Esophagus squamous epithelium (tissue), 5 donors: ENCODE measurements at regions of chr4 and their contacts with region 1.

Region 1: GRCh38 chr4:185395956-185396723 is 416 bp upstream of the LRP2BP start:
- DNase-seq: peak; percentile 76
- H3K4me3 ChIP-seq: peak overlapping the region; percentile 54 to 85 (median 76)
- H3K27ac ChIP-seq: peak overlapping the region; percentile 95 to 100 (median 98)
- H3K4me1 ChIP-seq: peaks cover 7 to 56% (median 19%) of the 10 kb centered on the region in 3 donors
- H3K27me3 ChIP-seq: no peaks in the 10 kb centered on the region
- CTCF ChIP-seq: no peak
- POLR2A ChIP-seq: peak in 3 of 4 donors; percentile 73 to 84 (median 83)

Region 2: GRCh38 chr4:185203486-185204237 is 192.5 kb before region 1 on chr4 and contains the start of gene CFAP97:
- intact Hi-C with region 1: loop called (anchors 10 kb)
- DNase-seq: peak; percentile 41
- H3K4me3 ChIP-seq: peak within 1 kb of the TSS; percentile 62 to 96 (median 82)
- H3K27ac ChIP-seq: peak within 1 kb of the TSS; percentile 92 to 98 (median 96)
- H3K4me1 ChIP-seq: peaks cover 19 to 40% (median 20%) of the 10 kb centered on the region in 3 donors
- H3K27me3 ChIP-seq: no peaks in the 10 kb centered on the region
- CTCF ChIP-seq: peak in 2 of 6 experiments; percentile 5 to 32
- POLR2A ChIP-seq: peak in 2 of 4 donors; percentile 78 to 82
- total RNA-seq, gene CFAP97: 14.6 to 34.0 (median 20.0) TPM

Region 3: DNA sequence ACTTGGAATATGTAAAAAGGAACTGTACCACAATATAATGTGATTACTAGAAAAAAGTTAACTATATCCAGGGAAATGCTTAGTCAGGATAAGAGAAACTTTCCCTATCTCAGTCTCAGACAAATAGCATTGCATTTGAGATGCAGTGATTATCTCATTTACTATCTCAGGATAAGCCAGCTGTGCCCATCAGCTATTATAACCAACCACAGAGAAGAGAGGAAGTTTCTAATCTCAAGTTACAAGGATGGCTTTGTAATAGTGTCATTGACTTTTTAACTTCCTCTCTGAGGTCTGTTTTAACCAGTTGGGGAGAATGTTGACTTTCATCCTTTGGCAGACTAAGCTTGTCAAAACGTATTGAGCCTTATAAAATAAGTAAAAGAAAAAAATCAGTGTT is 130.2 kb before region 1 on chr4:
- intact Hi-C with region 1: no loop called
- DNase-seq: no peak
- H3K4me3 ChIP-seq: no peak overlapping the region
- H3K27ac ChIP-seq: no peak overlapping the region
- H3K4me1 ChIP-seq: no peaks in the 10 kb centered on the region
- H3K27me3 ChIP-seq: no peaks in the 10 kb centered on the region
- CTCF ChIP-seq: no peak
- POLR2A ChIP-seq: no peak